ENCODE measurements at regions of chr12 and their contacts with region 1.

Region 1: GRCh38 chr12:123983822-123984485 is 10.9 kb downstream of the ZNF664 start:
- DNase-seq: peak; percentile 11 to 52
- H3K4me3 ChIP-seq: no peak overlapping the region
- H3K27ac ChIP-seq: no peak overlapping the region
- H3K4me1 ChIP-seq: no peaks in the 10 kb centered on the region
- H3K27me3 ChIP-seq: no peaks in the 10 kb centered on the region
- CTCF ChIP-seq: peak; percentile 69

Region 2: DNA sequence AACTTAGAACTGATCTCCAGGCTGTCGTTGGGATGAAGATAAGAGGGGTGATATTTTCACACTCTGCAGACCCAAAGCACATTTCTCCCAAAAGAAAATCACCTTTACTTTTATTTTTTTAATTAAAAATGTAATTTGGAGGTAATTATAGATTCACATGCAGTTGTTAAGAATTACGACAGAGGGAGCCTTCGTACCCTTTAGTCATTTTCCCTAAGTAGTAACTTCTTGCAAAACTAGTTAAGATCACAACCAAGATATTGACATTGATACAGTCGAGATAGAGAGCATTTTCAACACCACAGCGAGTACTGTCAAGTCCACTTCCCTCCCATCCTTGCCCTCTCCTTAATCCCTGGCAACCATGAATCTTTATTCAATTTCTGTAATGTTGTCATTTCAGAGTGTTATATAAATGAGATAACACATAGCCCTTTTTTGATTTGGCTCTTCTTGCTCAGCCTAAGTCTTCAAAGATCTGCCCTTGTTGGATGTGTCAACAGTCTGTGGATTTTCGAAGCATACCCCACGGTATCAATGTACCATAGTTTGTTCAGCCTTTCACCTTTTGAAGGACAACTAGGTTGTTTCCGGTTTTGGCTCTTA is 182.3 kb before region 1 on chr12:
- CTCF ChIA-PET with region 1: interaction called, 11 read pairs
- POLR2A ChIA-PET with region 1: no interaction called
- intact Hi-C with region 1: loop called (anchors 1 kb)
- DNase-seq: peak in 1 of 2 experiments; percentile 46
- H3K4me3 ChIP-seq: no peak overlapping the region
- H3K27ac ChIP-seq: no peak overlapping the region
- H3K4me1 ChIP-seq: no peaks in the 10 kb centered on the region
- H3K27me3 ChIP-seq: peaks cover 20% of the 10 kb centered on the region; the same call in 1 of the 2 replicates
- CTCF ChIP-seq: peak; percentile 72

Region 3: GRCh38 chr12:123807002-123807401 is 177.0 kb before region 1 on chr12:
- CTCF ChIA-PET with region 1: interaction called, 11 read pairs
- POLR2A ChIA-PET with region 1: no interaction called
- intact Hi-C with region 1: no loop called
- DNase-seq: no peak
- H3K4me3 ChIP-seq: no peak overlapping the region
- H3K27ac ChIP-seq: no peak overlapping the region
- H3K4me1 ChIP-seq: no peaks in the 10 kb centered on the region
- H3K27me3 ChIP-seq: peaks cover 33% of the 10 kb centered on the region; the same call in 1 of the 2 replicates
- CTCF ChIP-seq: no peak

Region 4: GRCh38 chr12:123995023-123995748 is 11.2 kb after region 1 on chr12:
- CTCF ChIA-PET with region 1: no interaction called
- POLR2A ChIA-PET with region 1: interaction called, 23 read pairs
- intact Hi-C with region 1: no loop called
- DNase-seq: no peak
- H3K4me3 ChIP-seq: no peak overlapping the region
- H3K27ac ChIP-seq: no peak overlapping the region
- H3K4me1 ChIP-seq: peaks cover 6% of the 10 kb centered on the region; the same call in 1 of the 2 replicates
- H3K27me3 ChIP-seq: no peaks in the 10 kb centered on the region
- CTCF ChIP-seq: no peak

Measured in PC-9 (cell line).